ENCODE measurements at regions of chr5 and their contacts with region 1.

Region 1: DNA sequence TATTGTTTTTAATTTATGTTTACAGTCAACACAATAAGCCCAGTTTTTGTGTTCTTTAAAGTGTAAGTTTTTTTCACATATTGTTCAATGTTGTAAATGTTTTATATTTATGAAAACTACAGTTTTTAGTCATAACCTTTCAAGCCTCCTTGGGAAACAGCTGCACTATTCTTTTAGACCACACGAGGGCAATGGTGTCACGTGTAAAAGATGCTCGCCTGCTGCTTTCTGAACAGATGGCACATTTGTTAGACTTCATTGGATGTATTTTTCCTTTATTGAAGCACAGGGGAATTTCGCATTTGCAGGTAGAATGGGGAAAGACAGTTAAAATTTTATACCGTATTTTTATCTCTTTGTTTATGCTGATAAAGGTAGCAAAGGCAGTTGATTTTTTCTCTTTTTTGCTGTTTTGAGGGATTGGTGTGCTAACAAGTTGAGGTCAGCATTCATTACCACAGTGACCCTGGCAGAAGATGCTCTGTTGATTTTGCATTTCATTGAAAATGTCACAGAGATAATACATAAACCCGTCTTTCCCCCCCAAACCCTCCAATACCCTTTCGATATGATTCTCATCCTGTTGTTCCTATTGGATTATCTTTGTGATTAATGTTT is 59.0 kb downstream of the MAT2B start:
- DNase-seq: peak; percentile 76
- ATAC-seq: peak; percentile 32
- H3K4me3 Mint-ChIP-seq: no peak overlapping the region
- H3K27ac Mint-ChIP-seq: no peak overlapping the region
- H3K4me1 Mint-ChIP-seq: peaks cover 27% of the 10 kb centered on the region
- H3K27me3 Mint-ChIP-seq: peaks cover 49% of the 10 kb centered on the region
- CTCF ChIP-seq: peak; percentile 97

Region 2: GRCh38 chr5:163453705-163454104 is 110.7 kb before region 1 on chr5:
- CTCF ChIA-PET with region 1: no interaction called
- POLR2A ChIA-PET with region 1: no interaction called
- intact Hi-C with region 1: no loop called
- DNase-seq: no peak
- ATAC-seq: no peak
- H3K4me3 Mint-ChIP-seq: no peak overlapping the region
- H3K27ac Mint-ChIP-seq: no peak overlapping the region
- H3K4me1 Mint-ChIP-seq: peaks cover 30% of the 10 kb centered on the region
- H3K27me3 Mint-ChIP-seq: no peaks in the 10 kb centered on the region
- CTCF ChIP-seq: no peak

Region 3: GRCh38 chr5:163758280-163758711 is 193.9 kb after region 1 on chr5:
- CTCF ChIA-PET with region 1: no interaction called
- POLR2A ChIA-PET with region 1: no interaction called
- intact Hi-C with region 1: no loop called
- DNase-seq: no peak
- ATAC-seq: no peak
- H3K4me3 Mint-ChIP-seq: no peak overlapping the region
- H3K27ac Mint-ChIP-seq: no peak overlapping the region
- H3K4me1 Mint-ChIP-seq: no peaks in the 10 kb centered on the region
- H3K27me3 Mint-ChIP-seq: no peaks in the 10 kb centered on the region
- CTCF ChIP-seq: no peak

Region 4: GRCh38 chr5:164504141-164504772 is 939.8 kb after region 1 on chr5:
- CTCF ChIA-PET with region 1: interaction called, 10 read pairs
- POLR2A ChIA-PET with region 1: no interaction called
- intact Hi-C with region 1: loop called (anchors 2 kb)
- DNase-seq: peak; percentile 34
- ATAC-seq: no peak
- H3K4me3 Mint-ChIP-seq: no peak overlapping the region
- H3K27ac Mint-ChIP-seq: no peak overlapping the region
- H3K4me1 Mint-ChIP-seq: no peaks in the 10 kb centered on the region
- H3K27me3 Mint-ChIP-seq: no peaks in the 10 kb centered on the region
- CTCF ChIP-seq: peak; percentile 64

Region 5: DNA sequence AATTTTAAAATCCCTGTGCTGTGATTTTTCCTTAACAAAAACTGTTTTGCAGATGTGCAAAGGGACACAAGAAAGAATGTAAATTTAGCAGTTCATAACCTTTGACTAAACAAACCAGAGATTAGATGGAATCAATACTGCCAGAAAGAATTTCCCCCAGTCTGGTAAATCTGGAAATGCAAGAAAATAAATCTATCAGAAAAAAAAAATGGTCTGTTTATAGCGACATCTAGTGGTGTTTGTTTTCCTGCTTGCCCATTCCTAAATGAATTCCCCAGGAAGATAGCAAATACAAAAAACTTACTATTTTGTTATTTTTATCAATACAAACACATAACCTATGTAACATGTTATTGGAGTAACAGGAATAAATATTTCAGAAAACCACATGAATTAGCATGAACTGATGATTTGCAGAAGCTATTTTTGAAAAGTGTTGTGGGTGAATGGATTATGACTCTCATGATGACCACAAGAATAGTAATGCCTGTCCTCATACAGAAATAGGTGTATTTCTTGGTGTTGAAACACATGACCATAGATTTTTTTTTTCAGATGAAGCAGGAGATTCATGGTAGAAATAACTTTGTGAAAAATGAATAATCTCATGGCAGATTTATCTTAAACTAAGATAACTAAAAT is 1644.8 kb after region 1 on chr5:
- CTCF ChIA-PET with region 1: no interaction called
- POLR2A ChIA-PET with region 1: no interaction called
- intact Hi-C with region 1: loop called (anchors 5 kb)
- DNase-seq: no peak
- ATAC-seq: no peak
- H3K4me3 Mint-ChIP-seq: no peak overlapping the region
- H3K27ac Mint-ChIP-seq: no peak overlapping the region
- H3K4me1 Mint-ChIP-seq: no peaks in the 10 kb centered on the region
- H3K27me3 Mint-ChIP-seq: no peaks in the 10 kb centered on the region
- CTCF ChIP-seq: peak; percentile 78

Measured in activated CD8-positive, alpha-beta T cell treated with anti-CD3 and anti-CD28 coated beads for 36 hours (primary cell).